Transverse colon (tissue), 4 donors: ENCODE measurements at regions of chr7 and their contacts with region 1.

Region 1: DNA sequence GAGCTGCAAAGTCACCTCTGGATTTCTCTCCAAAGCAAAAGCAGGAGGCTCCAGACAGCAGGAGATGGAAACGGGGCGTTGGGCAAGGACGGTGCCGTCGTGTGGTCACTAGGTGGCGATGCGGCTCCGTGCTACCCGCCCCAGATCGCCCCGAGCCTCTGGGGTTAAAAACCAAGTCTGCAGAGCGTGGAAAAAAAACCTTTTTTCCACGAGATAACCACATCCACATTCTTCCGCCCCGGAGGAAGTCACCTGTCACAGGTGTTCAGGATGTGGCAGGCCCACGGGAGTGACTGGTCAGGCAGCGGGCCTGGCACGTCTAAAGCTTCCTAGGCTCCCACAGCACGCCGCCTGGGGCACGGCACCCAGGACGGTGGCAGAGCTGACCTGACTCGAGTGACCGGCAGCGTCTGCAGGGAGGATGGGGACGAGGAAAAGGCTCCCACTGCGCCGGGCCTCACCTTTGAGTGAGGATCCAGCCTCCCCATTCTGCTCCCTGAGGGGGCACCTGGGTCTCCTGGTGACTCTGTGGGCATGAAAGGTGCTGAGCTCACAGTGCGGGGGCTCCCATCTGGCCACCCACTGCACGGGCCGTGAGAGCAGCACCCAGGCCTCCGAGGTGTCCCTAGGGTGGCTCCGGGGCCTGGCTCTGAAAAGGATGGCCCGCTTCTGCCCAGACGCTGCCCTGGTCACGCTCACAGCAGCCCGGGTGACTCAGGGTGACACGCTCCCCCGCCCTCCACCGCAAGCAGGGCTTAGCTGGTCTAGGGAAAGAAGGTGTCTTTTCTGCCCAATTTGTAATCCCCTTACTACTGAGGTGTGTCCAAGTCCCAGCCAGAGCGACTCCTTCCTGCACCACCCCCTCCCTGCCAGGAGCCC is 71.3 kb upstream of the TNRC18 start:
- DNase-seq: peak; percentile 76
- H3K4me3 ChIP-seq: peak overlapping the region in 2 of 4 donors; percentile 13 to 22
- H3K27ac ChIP-seq: peak overlapping the region in 3 of 4 donors; percentile 64 to 72 (median 65)
- H3K4me1 ChIP-seq: peaks cover 7 to 27% (median 13%) of the 10 kb centered on the region in 4 donors
- H3K27me3 ChIP-seq: no peaks in the 10 kb centered on the region
- CTCF ChIP-seq: peak; percentile 88 to 96 (median 92)
- EP300 ChIP-seq: no peak
- POLR2A ChIP-seq: no peak

Region 2: GRCh38 chr7:5665094-5666025 is 170.4 kb after region 1 on chr7:
- in situ Hi-C with region 1: loop called (anchors 5 to 10 kb)
- intact Hi-C with region 1: loop called (anchors 5 kb)
- DNase-seq: peak; percentile 77
- H3K4me3 ChIP-seq: no peak overlapping the region
- H3K27ac ChIP-seq: peak overlapping the region in 3 of 4 donors; percentile 11 to 35 (median 29)
- H3K4me1 ChIP-seq: peaks cover 0 to 19% (median 4%) of the 10 kb centered on the region in 4 donors
- H3K27me3 ChIP-seq: no peaks in the 10 kb centered on the region
- CTCF ChIP-seq: peak; percentile 79 to 96 (median 87)
- EP300 ChIP-seq: no peak
- POLR2A ChIP-seq: no peak

Region 3: DNA sequence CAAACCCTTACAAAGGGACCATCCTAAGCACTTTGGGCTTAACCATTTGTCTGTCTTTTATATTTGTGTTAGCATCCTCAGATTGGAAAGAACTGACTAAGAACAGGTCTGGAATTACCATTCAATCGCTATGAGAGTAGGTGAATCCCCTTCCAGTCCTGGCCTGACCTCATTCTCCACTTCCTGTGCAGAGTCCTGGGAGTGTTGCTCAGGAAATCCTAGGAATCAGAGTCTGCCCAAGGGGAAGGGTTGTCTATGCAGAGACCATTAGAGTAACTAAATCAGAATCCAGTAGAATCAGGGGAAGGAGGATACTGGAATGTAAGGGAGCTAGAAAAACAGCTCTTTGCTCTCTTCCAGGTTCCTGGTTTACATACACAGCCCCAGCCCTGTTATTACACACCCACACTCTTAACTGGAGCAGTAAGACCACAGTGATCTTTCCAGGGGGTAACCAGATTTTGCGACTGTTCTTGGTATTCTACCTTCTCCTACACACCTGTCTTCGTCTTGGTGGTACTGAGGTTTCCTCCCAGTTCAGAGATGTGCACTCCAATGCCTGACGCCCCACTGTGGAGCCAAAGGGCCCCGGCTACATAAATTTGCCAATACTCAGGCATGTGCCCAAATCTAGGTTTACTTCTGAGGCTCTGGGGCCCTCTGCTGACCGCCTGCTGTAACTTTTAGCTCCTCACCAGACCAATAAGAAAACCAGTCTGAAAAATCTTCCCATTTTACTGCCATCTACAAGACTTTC is 182.8 kb after region 1 on chr7:
- in situ Hi-C with region 1: loop called in 1 of 4 experiments (anchors 10 kb)
- intact Hi-C with region 1: no loop called
- DNase-seq: peak; percentile 61
- H3K4me3 ChIP-seq: no peak overlapping the region
- H3K27ac ChIP-seq: peak overlapping the region; percentile 42 to 74 (median 60)
- H3K4me1 ChIP-seq: peaks cover 22 to 66% (median 38%) of the 10 kb centered on the region in 4 donors
- H3K27me3 ChIP-seq: no peaks in the 10 kb centered on the region
- CTCF ChIP-seq: peak; percentile 50 to 63 (median 55)
- EP300 ChIP-seq: no peak
- POLR2A ChIP-seq: no peak

Region 4: GRCh38 chr7:5687936-5688630 is 193.2 kb after region 1 on chr7:
- in situ Hi-C with region 1: no loop called
- intact Hi-C with region 1: no loop called
- DNase-seq: no peak
- H3K4me3 ChIP-seq: no peak overlapping the region
- H3K27ac ChIP-seq: peak overlapping the region; percentile 83 to 93 (median 88)
- H3K4me1 ChIP-seq: peaks cover 12 to 70% (median 63%) of the 10 kb centered on the region in 4 donors
- H3K27me3 ChIP-seq: no peaks in the 10 kb centered on the region
- CTCF ChIP-seq: no peak
- EP300 ChIP-seq: no peak
- POLR2A ChIP-seq: no peak

Region 5: GRCh38 chr7:5704534-5704922 is 209.6 kb after region 1 on chr7:
- in situ Hi-C with region 1: loop called in 2 of 4 experiments (anchors 10 kb)
- intact Hi-C with region 1: no loop called
- DNase-seq: peak; percentile 79
- H3K4me3 ChIP-seq: no peak overlapping the region
- H3K27ac ChIP-seq: peak overlapping the region in 3 of 4 donors; percentile 77 to 93 (median 83)
- H3K4me1 ChIP-seq: peaks cover 9 to 30% (median 13%) of the 10 kb centered on the region in 4 donors
- H3K27me3 ChIP-seq: no peaks in the 10 kb centered on the region
- CTCF ChIP-seq: peak; percentile 85 to 90 (median 90)
- EP300 ChIP-seq: no peak
- POLR2A ChIP-seq: no peak